Lower lobe of right lung (tissue), 2 donors: ENCODE measurements at regions of chr16 and their contacts with region 1.

Region 1: DNA sequence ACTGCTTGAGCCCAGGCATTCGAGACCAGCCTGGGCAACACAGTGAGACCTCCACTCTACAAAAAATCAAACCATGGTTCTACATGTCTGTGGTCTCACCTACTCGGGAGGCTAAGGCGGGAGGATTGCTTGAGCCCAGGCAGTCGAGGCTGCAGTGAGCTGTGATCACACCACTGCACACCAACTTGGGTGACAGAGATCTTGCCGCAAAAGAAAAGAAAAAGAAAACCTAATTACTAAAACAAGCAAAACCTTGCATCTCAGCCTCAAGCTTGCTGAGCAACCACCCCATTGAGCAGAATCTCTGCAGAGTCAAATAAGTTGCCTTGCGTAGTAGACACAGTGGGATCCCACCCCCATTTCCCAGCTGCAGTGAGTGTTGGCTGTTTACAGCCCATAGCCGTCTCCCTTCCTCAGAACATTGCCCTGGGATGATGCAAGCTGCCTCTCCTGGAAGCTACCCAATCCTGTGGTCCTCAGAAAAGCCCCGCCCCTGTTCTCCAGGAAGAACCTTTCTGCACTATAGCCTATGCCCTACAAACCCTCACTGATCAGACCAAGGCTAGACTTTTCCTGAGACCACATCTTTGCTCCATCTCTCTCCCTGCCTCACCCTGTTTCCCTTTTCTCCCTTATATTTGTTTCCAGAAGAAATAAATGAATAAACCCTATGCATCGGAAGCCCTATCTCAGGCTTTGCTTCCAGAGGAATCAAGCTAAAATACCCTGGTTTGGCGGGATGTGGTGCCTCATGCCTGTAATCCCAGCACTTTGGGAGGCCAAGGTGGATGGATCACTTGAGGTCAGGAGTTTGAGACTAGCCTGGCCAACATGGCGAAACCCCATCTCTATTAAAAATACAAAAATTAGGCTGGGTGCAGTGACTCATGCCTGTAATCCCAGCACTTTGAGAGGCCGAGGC is 16.7 kb upstream of the ERN2 start:
- DNase-seq: peak; percentile 49
- ATAC-seq: peak; percentile 62 to 63
- H3K4me3 ChIP-seq: no peak overlapping the region
- H3K27ac ChIP-seq: no peak overlapping the region
- H3K4me1 ChIP-seq: no peaks in the 10 kb centered on the region
- H3K27me3 ChIP-seq: peaks cover 3% of the 10 kb centered on the region
- CTCF ChIP-seq: no peak

Region 2: GRCh38 chr16:23518435-23518891 is 211.3 kb before region 1 on chr16:
- intact Hi-C with region 1: no loop called
- DNase-seq: no peak
- ATAC-seq: peak; percentile 28 to 63
- H3K4me3 ChIP-seq: no peak overlapping the region
- H3K27ac ChIP-seq: peak overlapping the region; percentile 24
- H3K4me1 ChIP-seq: no peaks in the 10 kb centered on the region
- H3K27me3 ChIP-seq: no peaks in the 10 kb centered on the region
- CTCF ChIP-seq: no peak

Region 3: GRCh38 chr16:23795378-23795777 is 65.6 kb after region 1 on chr16:
- intact Hi-C with region 1: loop called (anchors 10 kb)
- DNase-seq: no peak
- ATAC-seq: no peak
- H3K4me3 ChIP-seq: no peak overlapping the region
- H3K27ac ChIP-seq: no peak overlapping the region
- H3K4me1 ChIP-seq: no peaks in the 10 kb centered on the region
- H3K27me3 ChIP-seq: no peaks in the 10 kb centered on the region
- CTCF ChIP-seq: no peak